ENCODE measurements at regions of chr5 and their contacts with region 1.

Region 1: GRCh38 chr5:146173597-146173996 is 8.9 kb downstream of the LARS1 start:
- DNase-seq: no peak
- H3K4me3 ChIP-seq: no peak overlapping the region
- H3K4me1 ChIP-seq: no peaks in the 10 kb centered on the region
- H3K27me3 ChIP-seq: no peaks in the 10 kb centered on the region

Region 2: DNA sequence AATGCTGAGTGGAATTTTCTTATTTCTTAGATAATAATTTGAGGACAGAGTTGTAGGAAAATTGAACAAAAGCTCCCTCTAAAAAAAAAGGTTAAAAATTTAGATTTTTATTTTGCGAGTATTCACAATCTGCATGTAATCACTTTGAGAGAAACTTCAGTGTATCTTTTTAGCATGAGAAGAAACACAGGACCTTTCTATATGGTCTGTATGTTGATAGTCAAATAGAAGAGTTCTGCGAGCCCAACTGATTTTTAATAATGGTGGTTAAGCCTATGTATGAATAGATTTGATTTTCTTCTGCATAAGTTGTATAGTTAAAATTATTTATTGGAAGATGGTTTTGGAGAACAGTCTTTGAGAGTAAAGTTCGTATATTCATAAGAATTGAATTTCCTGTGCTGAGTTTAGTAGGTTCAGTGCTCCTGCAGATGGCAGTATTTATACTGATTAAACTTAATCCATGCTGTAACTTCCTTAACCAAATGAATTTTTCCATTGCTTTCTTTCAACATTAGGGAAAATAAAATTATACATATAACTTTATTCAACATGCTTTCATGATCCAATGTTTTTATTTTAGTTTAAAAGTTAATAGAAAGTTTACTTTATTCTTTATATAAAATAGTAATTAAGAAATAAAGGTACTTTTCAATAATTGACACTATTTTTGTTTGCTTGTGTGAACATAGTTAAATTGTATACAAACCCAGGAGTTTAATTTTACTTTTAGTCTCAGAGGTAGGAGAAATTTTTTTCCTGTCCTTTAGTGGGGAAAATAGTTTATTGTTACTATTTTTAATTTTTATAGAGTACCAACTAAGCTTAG is 293.1 kb after region 1 on chr5:
- in situ Hi-C with region 1: loop called (anchors 25 kb)
- DNase-seq: no peak
- H3K4me3 ChIP-seq: no peak overlapping the region
- H3K4me1 ChIP-seq: no peaks in the 10 kb centered on the region
- H3K27me3 ChIP-seq: no peaks in the 10 kb centered on the region

Measured in HAP-1 (cell line).